MCF 10A (cell line): ENCODE measurements at regions of chr20 and their contacts with region 1.

Region 1: GRCh38 chr20:18507218-18508021 is at the start of gene SEC23B:
- DNase-seq: peak; percentile 98
- H3K4me3 Mint-ChIP-seq: peak within 1 kb of the TSS; percentile 100
- H3K27ac Mint-ChIP-seq: peak within 1 kb of the TSS; percentile 100
- H3K4me1 Mint-ChIP-seq: peaks cover 14% of the 10 kb centered on the region
- H3K27me3 Mint-ChIP-seq: no peaks in the 10 kb centered on the region
- CTCF ChIP-seq: no peak
- total RNA-seq, gene SEC23B: 139 TPM in 2 replicates

Region 2: DNA sequence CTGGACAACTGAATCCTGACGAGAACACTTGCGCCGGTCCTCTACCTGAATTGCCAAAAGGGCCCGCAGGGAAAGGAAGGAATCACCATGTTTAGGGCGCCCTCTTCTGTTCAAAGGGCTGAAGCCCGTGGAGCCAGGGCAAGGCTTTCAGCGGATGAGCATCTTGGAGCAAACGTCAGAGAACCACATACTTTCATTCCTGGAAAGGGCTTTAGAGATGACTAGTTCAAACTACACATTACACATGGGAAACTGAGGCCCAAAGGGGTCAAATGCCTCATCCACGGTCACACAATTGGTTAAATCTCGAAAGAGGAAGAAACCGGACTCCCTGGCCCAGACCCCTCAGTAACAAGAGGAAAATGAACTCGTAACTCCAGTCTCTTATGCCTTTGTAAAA is 230.6 kb before region 1 on chr20:
- CTCF ChIA-PET with region 1: no interaction called
- POLR2A ChIA-PET with region 1: no interaction called
- intact Hi-C with region 1: no loop called
- DNase-seq: peak; percentile 85
- H3K4me3 Mint-ChIP-seq: no peak overlapping the region
- H3K27ac Mint-ChIP-seq: no peak overlapping the region
- H3K4me1 Mint-ChIP-seq: peaks cover 19% of the 10 kb centered on the region
- H3K27me3 Mint-ChIP-seq: peaks cover 12% of the 10 kb centered on the region
- CTCF ChIP-seq: peak; percentile 77

Region 3: DNA sequence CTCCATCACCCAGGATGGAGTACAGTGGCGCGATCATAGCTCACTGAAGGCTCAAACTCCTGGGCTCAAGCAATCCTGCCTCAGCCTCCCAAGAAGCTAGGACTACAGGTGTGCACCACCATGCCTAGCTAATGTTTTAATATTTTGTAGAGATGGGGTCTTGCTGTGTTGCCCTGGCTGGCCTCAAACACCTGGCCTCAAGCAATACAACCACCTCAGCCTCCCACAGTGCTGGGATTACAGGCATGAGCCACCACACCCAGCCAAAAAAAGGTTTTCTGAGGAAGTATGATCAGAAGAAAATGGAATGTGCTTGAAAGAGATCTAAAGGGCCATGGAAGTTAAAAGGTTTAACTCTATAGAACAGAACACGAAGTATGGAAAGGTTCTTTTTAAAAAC is 19.1 kb before region 1 on chr20:
- CTCF ChIA-PET with region 1: no interaction called
- POLR2A ChIA-PET with region 1: interaction called, 30 read pairs
- intact Hi-C with region 1: no loop called
- DNase-seq: no peak
- H3K4me3 Mint-ChIP-seq: no peak overlapping the region
- H3K27ac Mint-ChIP-seq: no peak overlapping the region
- H3K4me1 Mint-ChIP-seq: no peaks in the 10 kb centered on the region
- H3K27me3 Mint-ChIP-seq: no peaks in the 10 kb centered on the region
- CTCF ChIP-seq: no peak

Region 4: GRCh38 chr20:18524646-18525045 is 17.2 kb after region 1 on chr20:
- CTCF ChIA-PET with region 1: interaction called, 5 read pairs
- POLR2A ChIA-PET with region 1: interaction called, 31 read pairs
- intact Hi-C with region 1: no loop called
- DNase-seq: peak; percentile 65
- H3K4me3 Mint-ChIP-seq: peak overlapping the region; percentile 30
- H3K27ac Mint-ChIP-seq: no peak overlapping the region
- H3K4me1 Mint-ChIP-seq: peaks cover 14% of the 10 kb centered on the region
- H3K27me3 Mint-ChIP-seq: no peaks in the 10 kb centered on the region
- CTCF ChIP-seq: no peak

Region 5: DNA sequence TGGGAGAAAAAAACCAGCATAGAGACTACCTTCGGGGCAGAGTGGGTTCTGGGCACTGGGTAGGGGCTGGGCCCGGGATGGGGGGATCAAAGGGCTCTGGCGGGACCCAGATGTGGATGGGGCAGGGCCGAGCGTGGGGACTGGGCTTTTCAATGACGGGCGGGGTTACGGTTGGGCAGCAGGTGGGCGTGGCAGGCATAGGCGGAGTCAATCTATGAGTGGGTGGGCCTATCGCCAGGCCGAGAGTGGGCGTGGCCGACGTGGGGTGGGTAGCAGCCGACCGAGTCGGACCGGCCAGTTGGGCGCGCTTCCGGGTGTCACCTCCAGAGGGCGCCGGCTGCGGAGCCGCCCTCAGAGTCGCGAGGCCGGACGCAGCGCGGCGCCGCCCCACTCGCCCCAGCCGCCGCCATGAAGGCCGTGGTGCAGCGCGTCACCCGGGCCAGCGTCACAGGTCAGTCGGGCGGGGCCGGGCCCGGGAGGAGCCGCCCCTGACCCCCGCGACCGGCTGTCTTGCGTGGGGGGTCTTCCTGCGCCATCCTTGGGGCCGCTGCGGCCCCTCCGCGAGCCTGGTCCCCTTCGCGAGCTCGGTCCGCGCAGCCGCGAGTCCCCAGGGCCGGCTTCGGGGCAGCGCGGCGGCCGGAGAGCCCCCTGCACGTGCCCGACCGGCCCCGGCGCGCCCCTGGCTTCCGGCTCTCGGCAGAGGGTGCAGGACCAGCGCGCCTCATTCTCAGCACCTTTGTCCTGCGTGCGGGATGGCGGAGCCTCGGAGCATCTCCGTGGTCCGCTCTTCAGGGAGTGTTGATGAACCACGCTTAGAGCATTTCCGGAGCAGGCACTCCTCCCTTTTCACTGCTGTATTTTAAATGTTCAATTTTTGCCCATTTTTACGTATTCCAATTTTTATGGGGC is 80.5 kb after region 1 on chr20 and contains the start of gene DTD1:
- CTCF ChIA-PET with region 1: interaction called, 4 read pairs
- POLR2A ChIA-PET with region 1: interaction called, 13 read pairs
- intact Hi-C with region 1: no loop called
- DNase-seq: peak; percentile 89
- H3K4me3 Mint-ChIP-seq: peak within 1 kb of the TSS; percentile 89
- H3K27ac Mint-ChIP-seq: peak within 1 kb of the TSS; percentile 96
- H3K4me1 Mint-ChIP-seq: peaks cover 18% of the 10 kb centered on the region
- H3K27me3 Mint-ChIP-seq: no peaks in the 10 kb centered on the region
- CTCF ChIP-seq: peak; percentile 73
- total RNA-seq, gene DTD1: 101 and 113 TPM in 2 replicates